Right ventricle myocardium superior (tissue), 1 donor: ENCODE measurements at regions of chr4 and their contacts with region 1.

Region 1: DNA sequence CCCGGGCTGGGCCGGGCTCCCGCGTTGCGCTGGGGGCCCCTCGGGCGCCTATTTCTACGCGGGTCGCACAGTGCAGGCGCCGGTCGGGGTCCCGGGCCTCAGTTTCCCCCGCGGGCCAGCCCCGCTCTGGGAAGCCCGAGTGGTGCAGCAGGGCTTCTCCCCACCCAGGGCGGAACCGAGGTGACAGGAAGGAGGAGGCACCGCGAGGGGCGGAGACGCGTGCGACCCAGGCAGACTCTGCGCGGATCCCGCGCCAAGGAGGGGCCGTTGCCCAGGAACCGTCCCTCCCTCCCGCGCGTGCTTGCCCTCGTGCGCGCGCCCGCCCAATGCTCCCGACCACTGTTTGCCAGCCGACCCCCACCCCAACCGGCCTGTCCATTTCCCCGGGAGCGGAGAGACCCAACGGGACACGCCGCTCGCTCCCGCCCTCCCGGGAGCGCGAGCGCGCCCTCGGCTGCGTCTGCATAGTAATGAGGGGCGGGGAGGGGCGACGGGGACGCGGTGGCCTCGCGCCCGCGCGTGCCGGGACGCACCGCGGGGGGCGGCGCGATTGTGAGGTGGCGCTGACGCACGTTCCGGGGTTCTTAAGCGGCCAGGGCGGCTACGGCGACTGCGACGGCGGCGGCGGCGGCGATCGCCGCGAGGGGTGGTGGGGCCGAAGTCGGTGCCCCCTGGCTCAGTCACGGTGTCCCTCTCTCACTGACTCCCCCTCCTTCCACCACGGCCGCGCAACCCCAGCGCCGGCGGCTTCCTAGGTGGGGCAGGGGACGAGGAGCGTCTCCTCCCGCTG is at the start of gene CPEB2:
- DNase-seq: peak; percentile 98
- ATAC-seq: peak; percentile 89
- total RNA-seq, gene CPEB2: 26.2 TPM

Region 2: GRCh38 chr4:14667624-14668151 is 334.4 kb before region 1 on chr4:
- intact Hi-C with region 1: no loop called
- DNase-seq: no peak
- ATAC-seq: no peak

Region 3: DNA sequence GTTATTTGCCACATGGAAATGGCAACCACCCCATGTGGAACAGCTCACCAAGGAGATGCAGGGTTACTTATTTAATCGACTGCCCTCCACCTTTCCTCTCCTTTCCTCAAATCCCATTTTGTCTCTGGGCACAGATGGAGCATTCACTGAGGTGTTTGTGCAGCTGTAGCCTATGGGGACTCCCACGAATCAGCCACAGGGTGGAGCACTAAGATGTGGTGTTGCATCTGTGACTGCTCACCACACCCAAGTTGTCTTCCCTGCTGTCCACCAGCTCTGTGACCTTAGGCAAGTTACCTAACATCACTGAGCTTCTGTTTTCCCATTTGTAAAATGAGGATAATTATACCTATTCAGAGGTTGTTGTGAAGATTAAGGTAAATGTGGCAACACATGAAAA is 252.2 kb before region 1 on chr4:
- intact Hi-C with region 1: loop called (anchors 10 kb)
- DNase-seq: peak; percentile 55
- ATAC-seq: peak; percentile 92